ENCODE measurements at regions of chr9 and their contacts with region 1.

Region 1: DNA sequence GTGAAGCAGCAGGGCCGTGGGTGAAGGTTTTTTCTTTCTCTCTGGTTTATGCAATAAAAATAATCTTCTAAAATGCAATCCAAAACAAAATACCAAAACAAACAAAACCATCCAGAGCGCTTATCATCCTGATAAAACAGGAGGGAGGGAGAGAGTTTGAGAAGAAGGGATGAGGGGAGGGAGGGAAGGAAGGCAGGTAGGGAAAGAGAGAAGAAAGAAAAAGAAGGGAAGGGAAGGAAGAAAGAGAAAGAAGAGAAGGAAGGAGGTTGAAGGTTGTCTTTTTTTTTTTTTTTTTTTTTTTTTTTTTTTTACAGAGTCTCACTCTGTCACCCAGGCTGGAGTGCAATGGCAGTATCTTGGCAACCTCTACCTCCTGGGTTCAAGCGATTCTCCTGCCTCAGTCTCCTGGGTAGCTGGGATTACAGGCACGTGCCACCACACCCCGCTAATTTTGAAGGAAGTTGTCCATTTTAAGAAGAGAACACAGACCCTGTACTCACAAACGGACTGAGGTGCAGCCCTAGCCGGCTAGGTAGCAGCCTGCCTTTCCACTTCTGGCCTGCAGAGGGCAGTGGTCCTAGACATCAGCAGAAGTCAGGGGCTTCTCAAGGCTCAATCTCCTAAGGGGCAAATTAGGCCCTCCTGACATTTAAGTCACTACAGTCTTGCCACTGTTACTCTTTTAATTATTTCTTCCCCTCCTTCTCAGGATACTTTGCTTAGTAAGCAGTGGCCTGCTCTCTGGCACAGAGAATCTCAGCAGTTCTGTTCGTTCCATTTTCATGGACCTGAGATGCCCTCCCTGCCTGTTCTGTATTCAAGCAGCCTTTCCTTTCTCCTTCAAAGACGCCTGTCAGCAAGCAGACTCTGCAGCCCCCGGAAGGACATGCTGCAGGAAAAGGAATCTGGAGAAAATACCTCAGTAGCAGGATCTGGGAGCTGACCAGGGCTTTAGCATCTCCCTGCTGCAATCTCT is 76.4 kb downstream of the EPB41L4B start:
- DNase-seq: peak; percentile 81
- H3K4me3 ChIP-seq: no peak overlapping the region
- H3K27ac ChIP-seq: no peak overlapping the region
- H3K4me1 ChIP-seq: no peaks in the 10 kb centered on the region
- H3K27me3 ChIP-seq: no peaks in the 10 kb centered on the region
- CTCF ChIP-seq: peak; percentile 89

Region 2: GRCh38 chr9:108842610-108843295 is 401.7 kb before region 1 on chr9:
- intact Hi-C with region 1: no loop called
- DNase-seq: no peak
- H3K4me3 ChIP-seq: no peak overlapping the region
- H3K27ac ChIP-seq: no peak overlapping the region
- H3K4me1 ChIP-seq: no peaks in the 10 kb centered on the region
- H3K27me3 ChIP-seq: no peaks in the 10 kb centered on the region
- CTCF ChIP-seq: no peak

Region 3: DNA sequence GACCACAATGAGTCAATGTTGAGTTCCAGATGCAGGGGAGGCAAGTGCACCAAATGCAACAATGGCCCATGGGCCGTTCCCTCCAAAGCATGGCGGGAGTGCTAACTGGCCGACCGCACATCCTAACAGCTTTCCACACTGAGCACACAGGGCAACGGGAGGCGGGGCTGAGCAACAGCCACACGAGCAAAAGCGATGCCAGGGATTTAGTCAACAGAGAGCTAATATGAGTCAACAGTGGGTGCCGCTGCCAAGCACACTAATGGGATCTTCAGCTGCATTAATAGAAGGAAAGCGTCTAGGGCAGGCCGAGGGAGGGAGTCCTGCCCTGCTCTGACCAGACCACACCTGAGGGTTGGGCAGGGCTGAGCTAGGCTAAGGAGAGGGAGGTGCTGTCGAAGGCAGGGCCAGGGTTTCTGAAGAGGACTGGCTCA is 71.8 kb after region 1 on chr9:
- intact Hi-C with region 1: loop called (anchors 5 kb)
- DNase-seq: peak; percentile 89
- H3K4me3 ChIP-seq: no peak overlapping the region
- H3K27ac ChIP-seq: peak overlapping the region; percentile 83
- H3K4me1 ChIP-seq: peaks cover 7% of the 10 kb centered on the region
- H3K27me3 ChIP-seq: peaks cover 9% of the 10 kb centered on the region
- CTCF ChIP-seq: no peak

Region 4: DNA sequence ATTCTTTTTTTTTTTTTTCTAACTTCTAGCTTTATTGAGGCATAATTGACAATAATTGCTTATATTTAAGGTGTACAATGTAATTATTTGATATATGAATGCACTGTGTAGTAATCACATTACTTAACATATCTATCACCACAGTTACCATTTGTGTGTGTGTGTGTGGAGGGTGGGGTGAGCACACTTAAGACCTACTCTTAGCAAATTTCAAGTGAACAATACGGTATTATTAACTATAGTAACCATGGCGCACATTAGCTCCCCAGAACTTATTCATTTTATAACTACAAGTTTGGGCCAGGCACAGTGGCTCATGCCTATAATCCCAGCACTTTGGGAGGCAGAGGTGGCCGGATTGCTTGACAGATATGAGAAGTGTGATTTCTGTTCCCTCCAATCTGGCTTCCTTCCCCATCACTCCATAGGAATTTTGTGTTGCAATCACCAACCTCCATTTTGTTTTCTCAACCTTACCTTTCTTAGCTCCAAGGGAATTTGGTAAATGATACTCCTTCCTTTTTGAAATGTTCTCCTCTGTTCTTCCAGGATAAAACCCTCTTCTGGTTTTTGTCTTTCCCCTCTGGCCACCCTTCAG is 996.9 kb after region 1 on chr9:
- intact Hi-C with region 1: no loop called
- DNase-seq: no peak
- H3K4me3 ChIP-seq: no peak overlapping the region
- H3K27ac ChIP-seq: no peak overlapping the region
- H3K4me1 ChIP-seq: no peaks in the 10 kb centered on the region
- H3K27me3 ChIP-seq: no peaks in the 10 kb centered on the region
- CTCF ChIP-seq: no peak